Naive thymus-derived CD4-positive, alpha-beta T cell (primary cell): ENCODE measurements at regions of chr6 and their contacts with region 1.

Region 1: GRCh38 chr6:52787917-52788316 is 15.7 kb downstream of the GSTA1 start:
- DNase-seq: no peak
- ATAC-seq: no peak
- H3K4me3 ChIP-seq: no peak overlapping the region
- H3K4me3 Mint-ChIP-seq: no peak overlapping the region
- H3K27ac ChIP-seq: no peak overlapping the region
- H3K27ac Mint-ChIP-seq: no peak overlapping the region
- H3K4me1 ChIP-seq: no peaks in the 10 kb centered on the region
- H3K4me1 Mint-ChIP-seq: no peaks in the 10 kb centered on the region
- H3K27me3 ChIP-seq: no peaks in the 10 kb centered on the region
- H3K27me3 Mint-ChIP-seq: peaks cover 7 to 22% (median 13%) of the 10 kb centered on the region in 5 donors

Region 2: DNA sequence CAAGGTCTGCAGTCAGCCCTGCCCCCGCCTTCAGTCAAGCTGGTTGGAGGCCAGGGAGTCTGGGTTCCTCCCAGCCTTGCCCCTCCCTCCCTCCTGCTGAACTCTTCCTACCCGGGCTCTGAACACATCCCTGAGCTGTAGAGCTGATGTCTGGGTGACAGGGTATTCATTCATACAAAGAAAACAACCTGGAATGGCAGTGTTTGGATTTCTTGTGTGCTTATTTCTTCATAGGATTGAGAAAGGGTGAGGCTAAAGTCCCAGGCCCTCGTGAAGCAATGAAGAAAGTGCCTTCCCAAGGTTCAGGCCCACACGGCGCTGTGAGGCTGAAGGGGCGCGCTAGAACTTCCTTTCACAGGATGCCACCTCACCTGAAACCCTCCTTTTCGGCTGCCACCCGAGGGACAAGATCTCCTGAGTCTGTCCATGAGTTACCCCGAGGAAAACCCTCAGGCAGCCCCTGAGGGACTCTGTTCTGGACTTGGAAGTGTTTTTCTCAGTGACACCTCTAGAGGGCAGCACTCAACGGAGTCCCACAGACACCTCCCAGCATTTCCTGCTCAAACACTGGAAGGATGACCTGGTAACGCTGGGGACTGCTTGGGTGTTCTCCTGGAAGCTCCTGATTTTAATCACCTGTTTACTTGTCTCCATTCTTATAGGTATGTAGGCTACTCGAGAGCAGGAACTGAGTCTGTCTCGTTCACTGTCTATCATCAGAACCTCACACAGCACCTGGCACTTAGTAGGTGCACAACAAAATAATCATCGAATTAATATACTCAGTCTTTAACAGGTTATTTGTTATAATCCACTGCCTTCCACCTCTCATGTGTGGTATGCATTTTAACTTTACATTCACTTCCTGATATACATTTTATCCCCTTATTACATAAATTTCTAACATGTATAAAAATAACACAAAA is 27.5 kb after region 1 on chr6:
- CTCF ChIA-PET with region 1: no interaction called
- POLR2A ChIA-PET with region 1: no interaction called
- intact Hi-C with region 1: loop called in 1 of 2 experiments (anchors 2 kb)
- DNase-seq: peak in 7 of 9 donors; percentile 9 to 47 (median 27)
- ATAC-seq: peak; percentile 84
- H3K4me3 ChIP-seq: no peak overlapping the region
- H3K4me3 Mint-ChIP-seq: no peak overlapping the region
- H3K27ac ChIP-seq: no peak overlapping the region
- H3K27ac Mint-ChIP-seq: no peak overlapping the region
- H3K4me1 ChIP-seq: no peaks in the 10 kb centered on the region
- H3K4me1 Mint-ChIP-seq: no peaks in the 10 kb centered on the region
- H3K27me3 ChIP-seq: no peaks in the 10 kb centered on the region
- H3K27me3 Mint-ChIP-seq: peaks cover 0 to 19% (median 9%) of the 10 kb centered on the region in 5 donors

Region 3: DNA sequence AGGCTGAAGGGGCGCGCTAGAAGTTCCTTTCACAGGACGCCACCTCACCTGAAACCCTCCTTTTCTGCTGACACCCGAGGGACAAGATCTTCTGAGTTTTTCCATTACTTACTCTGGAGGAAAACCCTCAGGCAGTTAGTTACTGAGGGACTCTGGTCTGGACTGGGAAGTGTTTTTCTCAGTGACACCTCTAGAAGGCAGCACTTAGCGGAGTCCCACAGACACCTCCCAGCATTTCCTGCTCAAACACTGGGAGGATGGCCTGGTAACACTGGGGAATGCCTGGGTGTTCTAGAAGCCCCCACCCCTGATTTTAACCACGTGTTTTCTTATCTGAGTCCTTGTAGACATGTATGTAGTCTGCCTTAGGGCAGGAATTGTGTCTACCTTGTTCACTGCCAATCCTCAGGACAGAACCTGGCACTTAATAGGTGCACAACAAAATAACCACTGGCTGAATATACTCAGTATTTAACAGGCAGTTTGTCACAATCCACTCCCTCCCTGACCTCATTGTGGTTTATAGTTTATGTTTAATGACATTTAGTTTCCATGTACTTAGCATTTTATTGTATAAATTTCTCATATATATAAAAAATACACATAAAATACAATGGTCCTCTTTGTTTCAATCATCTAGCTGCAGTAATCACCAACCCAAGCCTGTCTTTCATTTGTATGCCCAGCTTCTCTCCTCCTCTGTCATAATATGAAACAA is 116.8 kb after region 1 on chr6:
- CTCF ChIA-PET with region 1: no interaction called
- POLR2A ChIA-PET with region 1: no interaction called
- intact Hi-C with region 1: no loop called
- DNase-seq: no peak
- ATAC-seq: no peak
- H3K4me3 ChIP-seq: no peak overlapping the region
- H3K4me3 Mint-ChIP-seq: no peak overlapping the region
- H3K27ac ChIP-seq: no peak overlapping the region
- H3K27ac Mint-ChIP-seq: no peak overlapping the region
- H3K4me1 ChIP-seq: no peaks in the 10 kb centered on the region
- H3K4me1 Mint-ChIP-seq: no peaks in the 10 kb centered on the region
- H3K27me3 ChIP-seq: no peaks in the 10 kb centered on the region
- H3K27me3 Mint-ChIP-seq: peaks cover 0 to 11% (median 3%) of the 10 kb centered on the region in 5 donors